ENCODE measurements at regions of chr16 and their contacts with region 1.

Region 1: DNA sequence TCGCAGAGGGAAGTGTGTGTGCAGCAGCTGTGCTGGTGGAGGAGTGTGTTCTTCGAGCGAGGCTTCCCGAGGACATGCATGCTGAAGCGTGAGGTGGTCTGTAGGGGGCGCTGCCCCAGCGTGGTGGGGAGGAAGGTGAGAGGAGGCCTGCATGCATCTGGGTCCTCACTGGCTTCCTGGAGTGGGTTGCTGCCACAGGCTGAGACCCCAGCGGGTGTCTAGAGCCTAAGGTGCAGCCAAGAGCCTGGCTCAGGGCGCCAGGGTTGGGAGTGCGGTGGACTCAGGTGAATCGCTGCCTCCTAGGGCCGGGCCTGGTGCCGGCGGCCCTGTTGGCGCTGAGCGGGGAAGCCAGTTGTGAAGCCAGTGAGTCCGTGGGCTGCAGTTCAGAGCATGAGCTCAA is 7.5 kb upstream of the HSD3B7 start:
- DNase-seq: no peak
- ATAC-seq: no peak

Region 2: DNA sequence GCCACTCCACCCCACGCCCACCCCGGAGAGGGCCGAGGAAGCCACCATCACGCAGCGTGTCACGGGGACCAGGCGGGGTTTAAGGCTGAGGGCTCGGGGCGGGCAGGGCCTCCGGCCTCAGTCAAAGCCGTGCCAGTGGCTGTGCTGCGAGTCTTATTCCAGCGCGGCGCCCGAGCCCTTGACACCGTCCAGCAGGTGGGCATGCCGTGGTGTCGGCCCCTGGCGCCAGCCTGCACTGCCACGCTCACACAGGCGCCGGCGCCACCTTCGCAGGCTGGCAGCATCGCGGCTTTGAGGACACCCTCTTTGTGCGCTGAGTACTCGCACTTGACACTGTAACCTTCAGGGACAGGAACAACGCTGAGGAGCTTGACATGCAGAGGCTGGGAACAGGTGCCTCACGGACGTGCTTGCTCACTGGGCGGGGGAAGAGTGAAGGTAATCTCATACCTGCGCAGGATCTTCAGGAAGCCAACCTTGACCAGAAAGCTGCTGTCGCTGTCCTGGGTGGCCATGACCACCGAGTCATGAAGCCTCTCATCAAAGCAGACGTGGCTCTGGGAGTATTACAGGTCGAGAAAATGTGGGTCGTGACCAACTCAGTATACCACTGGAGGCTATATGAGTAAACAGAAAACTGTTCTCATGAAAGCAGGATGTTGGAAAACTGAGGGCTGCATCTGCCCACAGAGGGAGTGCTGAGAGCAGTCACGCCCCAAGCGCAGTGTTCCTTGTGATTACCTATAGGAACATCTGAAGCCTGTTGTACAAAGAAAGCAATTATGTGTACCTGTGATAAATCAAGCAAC is 156.3 kb before region 1 on chr16:
- intact Hi-C with region 1: no loop called
- DNase-seq: no peak
- ATAC-seq: no peak

Region 3: GRCh38 chr16:30867747-30868146 is 109.8 kb before region 1 on chr16:
- intact Hi-C with region 1: no loop called
- DNase-seq: no peak
- ATAC-seq: no peak

Region 4: GRCh38 chr16:31044190-31044481 is 66.6 kb after region 1 on chr16:
- intact Hi-C with region 1: loop called (anchors 5 kb)
- DNase-seq: no peak
- ATAC-seq: no peak

Region 5: DNA sequence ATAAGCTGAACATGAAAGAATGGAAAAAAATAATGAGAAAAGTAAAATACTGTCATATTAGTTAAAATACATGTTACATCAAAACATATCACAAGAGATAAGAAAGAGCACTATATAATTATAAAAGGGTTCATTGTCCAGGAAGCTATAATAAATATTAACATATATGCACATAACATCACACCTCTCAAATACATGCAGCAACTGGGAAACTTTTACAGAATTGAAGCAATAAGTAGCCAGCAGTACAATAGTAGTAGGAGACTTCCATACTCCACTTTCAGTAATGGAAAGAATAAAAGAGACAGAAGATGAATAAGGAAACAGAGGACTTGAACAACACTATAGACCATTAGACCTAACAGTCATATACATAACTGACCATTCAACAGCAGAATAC is 640.6 kb after region 1 on chr16:
- intact Hi-C with region 1: no loop called
- DNase-seq: no peak
- ATAC-seq: no peak